Mucosa of descending colon (tissue), 3 donors: ENCODE measurements at regions of chr5 and their contacts with region 1.

Region 1: GRCh38 chr5:139633295-139634027 is 14.7 kb upstream of the CXXC5 start:
- DNase-seq: peak; percentile 66 to 74 (median 69)
- ATAC-seq: peak; percentile 37
- H3K4me3 ChIP-seq: no peak overlapping the region
- H3K4me1 ChIP-seq: peaks cover 41% of the 10 kb centered on the region
- CTCF ChIP-seq: peak; percentile 86

Region 2: DNA sequence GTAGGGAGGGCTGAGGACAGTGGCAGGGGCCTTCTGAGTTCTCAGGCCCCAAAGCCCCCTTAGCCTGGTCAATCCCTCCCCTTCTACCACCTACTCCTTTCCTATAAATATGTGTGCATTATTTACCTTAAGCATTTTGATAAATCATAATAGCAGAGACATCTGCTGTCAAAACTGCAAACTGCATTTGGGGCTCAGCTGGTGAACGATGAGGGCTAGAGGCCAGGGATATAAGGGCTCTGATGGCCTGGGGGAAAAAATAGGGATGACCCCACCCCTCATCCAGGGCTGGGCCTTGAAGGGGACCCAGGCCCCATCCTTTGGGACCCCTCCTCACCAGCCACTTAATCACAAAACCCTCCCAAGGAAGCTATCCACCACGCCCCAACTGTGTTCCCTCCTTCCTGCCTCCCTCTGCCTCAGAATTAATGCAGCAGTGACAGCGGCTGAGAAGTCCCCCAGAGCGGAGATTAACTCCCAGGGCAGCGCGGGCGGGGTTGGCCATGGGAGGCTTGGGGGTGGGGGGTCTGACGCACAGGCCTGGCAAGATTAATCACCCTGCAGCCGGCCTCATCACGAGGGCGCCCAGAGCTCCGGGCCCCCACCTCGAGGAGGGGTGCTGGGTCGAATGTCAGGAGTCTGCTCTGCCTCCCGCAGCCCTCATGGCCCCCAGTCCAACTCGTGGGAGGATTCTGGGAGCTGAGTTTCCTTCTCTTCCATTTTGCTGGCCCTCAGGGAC is 56.8 kb after region 1 on chr5:
- intact Hi-C with region 1: loop called (anchors 5 to 10 kb)
- DNase-seq: peak in 1 of 3 donors; percentile 76
- ATAC-seq: peak; percentile 65
- H3K4me3 ChIP-seq: no peak overlapping the region
- H3K4me1 ChIP-seq: peaks cover 11% of the 10 kb centered on the region
- CTCF ChIP-seq: peak; percentile 15

Region 3: DNA sequence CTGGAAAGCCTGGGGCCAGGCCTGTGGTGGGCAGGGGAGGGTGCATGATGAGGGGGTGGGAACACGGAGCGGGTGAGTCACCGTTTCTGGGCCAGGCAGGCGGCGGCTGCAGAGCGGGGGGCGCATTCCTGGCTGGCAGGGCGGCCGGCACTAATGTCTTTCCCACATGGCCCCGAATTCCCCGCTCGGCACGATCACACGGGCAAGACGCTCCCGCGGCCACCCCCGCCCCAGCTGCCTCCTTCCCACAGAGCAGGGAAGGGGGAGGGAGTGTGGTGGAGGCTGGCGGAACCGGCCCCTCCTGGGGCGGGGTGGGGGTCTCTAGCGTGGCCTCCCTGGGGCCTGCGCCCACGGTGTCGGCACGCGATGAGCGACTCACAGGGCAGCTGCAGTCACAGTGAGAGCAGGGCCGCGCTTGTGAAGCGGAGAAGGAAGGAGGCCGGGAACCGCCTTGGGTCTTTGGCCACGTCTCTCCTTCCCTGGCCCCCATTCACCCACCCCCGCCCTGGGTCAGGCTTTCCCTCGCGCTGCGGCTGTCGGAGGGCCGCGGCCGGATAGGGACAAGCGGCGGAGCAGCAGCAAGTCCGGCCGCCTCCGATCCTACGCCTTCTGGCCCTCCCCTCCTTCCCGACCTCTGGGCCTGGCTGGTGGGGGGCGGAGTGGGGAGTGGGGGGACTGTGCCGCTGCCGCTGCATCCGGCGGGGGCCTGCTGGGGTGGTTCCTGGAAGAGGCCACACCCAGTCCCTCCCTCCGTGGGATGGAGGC is 63.6 kb after region 1 on chr5:
- intact Hi-C with region 1: loop called (anchors 5 to 10 kb)
- DNase-seq: peak; percentile 68 to 78 (median 71)
- ATAC-seq: peak; percentile 61
- H3K4me3 ChIP-seq: no peak overlapping the region
- H3K4me1 ChIP-seq: peaks cover 20% of the 10 kb centered on the region
- CTCF ChIP-seq: no peak

Region 4: DNA sequence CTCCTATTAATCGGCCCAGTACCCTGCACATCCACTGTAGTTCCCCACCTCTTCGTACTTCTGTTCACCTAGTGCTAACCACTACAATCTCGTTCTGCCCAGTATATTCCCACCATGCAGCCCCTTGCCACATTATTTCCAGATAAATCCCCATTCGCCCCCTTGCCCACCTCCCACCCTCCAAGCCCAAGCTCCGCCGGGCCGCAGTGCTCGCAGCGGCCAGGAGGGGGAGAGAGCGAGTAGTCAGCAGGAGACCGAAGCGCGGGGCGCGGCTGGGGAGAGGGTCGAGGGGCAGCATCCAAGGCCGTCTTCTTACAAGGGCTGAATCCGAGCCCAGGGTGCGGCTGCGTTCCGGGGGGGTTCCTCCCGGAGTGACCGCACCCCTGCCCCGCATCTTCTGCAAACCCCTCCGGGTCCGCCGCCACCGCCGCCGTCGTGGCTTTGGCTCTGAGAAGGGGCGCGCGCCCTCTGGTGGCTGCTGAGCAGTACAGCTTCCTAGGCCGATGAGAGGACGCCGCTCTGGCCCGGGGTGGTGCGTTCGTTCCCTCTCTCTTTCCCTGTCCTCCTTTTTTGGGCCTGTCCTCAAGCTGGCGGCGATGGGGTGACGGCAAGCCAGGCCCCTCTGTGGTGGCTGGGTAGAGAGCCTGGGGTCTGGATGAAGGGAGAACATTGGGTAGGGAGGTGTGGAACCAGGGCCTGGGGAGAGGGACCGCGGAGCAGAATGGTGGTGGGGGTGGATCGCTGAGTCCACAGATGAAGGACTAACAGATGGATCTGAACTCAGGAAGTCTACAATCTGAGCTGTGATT is 132.2 kb after region 1 on chr5:
- intact Hi-C with region 1: loop called (anchors 2 to 5 kb)
- DNase-seq: peak; percentile 78 to 87 (median 85)
- ATAC-seq: peak; percentile 95
- H3K4me3 ChIP-seq: no peak overlapping the region
- H3K4me1 ChIP-seq: no peaks in the 10 kb centered on the region
- CTCF ChIP-seq: peak; percentile 92

Region 5: DNA sequence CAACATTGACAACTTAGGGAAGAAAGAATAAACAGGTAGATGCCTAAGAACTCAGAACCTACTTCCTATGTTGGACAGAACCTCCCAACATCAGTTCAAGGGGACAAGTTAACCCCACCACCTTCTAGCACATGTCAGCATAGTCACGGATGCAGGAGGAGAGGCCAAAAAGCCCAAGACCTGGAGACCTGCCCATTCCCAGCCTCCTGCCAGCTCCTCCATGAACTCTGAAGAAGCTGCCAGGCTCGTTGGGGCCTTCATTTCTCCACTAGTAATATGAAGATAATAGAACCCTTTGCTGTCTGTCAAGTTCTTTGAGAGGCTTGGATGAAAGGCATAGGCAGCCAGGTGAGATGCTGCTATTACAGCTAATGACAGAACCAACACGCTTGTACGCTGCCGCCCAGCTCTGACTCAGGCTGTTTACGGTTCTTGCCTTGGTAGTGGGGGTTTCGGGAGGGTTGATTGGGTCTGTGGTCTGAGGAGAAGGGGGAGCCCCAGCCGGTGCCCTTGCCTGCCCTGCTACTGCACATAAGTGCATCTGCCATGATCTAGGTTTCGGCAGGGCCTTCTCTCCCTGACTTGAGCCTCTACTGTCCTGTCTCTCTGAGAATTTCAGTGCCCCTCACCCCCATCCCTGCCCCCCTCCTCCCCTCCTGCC is 327.4 kb after region 1 on chr5:
- intact Hi-C with region 1: no loop called
- DNase-seq: no peak
- ATAC-seq: no peak
- H3K4me3 ChIP-seq: no peak overlapping the region
- H3K4me1 ChIP-seq: no peaks in the 10 kb centered on the region
- CTCF ChIP-seq: no peak